ENCODE measurements at regions of chr9 and their contacts with region 1.

Region 1: GRCh38 chr9:112361601-112362000 is 18.3 kb upstream of the HSDL2 start:
- DNase-seq: no peak
- ATAC-seq: no peak
- H3K4me3 Mint-ChIP-seq: no peak overlapping the region
- H3K27ac Mint-ChIP-seq: no peak overlapping the region
- H3K4me1 Mint-ChIP-seq: peaks cover 12% of the 10 kb centered on the region
- H3K27me3 Mint-ChIP-seq: peaks cover 2% of the 10 kb centered on the region
- CTCF ChIP-seq: peak; percentile 89

Region 2: GRCh38 chr9:112074250-112075008 is 287.2 kb before region 1 on chr9:
- CTCF ChIA-PET with region 1: interaction called, 10 read pairs
- POLR2A ChIA-PET with region 1: no interaction called
- intact Hi-C with region 1: no loop called
- DNase-seq: peak; percentile 84
- ATAC-seq: peak; percentile 85
- H3K4me3 Mint-ChIP-seq: peak overlapping the region; percentile 9
- H3K27ac Mint-ChIP-seq: peak overlapping the region; percentile 28
- H3K4me1 Mint-ChIP-seq: peaks cover 28% of the 10 kb centered on the region
- H3K27me3 Mint-ChIP-seq: no peaks in the 10 kb centered on the region
- CTCF ChIP-seq: peak; percentile 91

Region 3: GRCh38 chr9:112097712-112098688 is 263.6 kb before region 1 on chr9:
- CTCF ChIA-PET with region 1: interaction called, 105 read pairs
- POLR2A ChIA-PET with region 1: interaction called, 3 read pairs
- intact Hi-C with region 1: loop called (anchors 2 kb)
- DNase-seq: peak; percentile 74
- ATAC-seq: peak; percentile 90
- H3K4me3 Mint-ChIP-seq: no peak overlapping the region
- H3K27ac Mint-ChIP-seq: no peak overlapping the region
- H3K4me1 Mint-ChIP-seq: peaks cover 31% of the 10 kb centered on the region
- H3K27me3 Mint-ChIP-seq: no peaks in the 10 kb centered on the region
- CTCF ChIP-seq: peak; percentile 85

Region 4: DNA sequence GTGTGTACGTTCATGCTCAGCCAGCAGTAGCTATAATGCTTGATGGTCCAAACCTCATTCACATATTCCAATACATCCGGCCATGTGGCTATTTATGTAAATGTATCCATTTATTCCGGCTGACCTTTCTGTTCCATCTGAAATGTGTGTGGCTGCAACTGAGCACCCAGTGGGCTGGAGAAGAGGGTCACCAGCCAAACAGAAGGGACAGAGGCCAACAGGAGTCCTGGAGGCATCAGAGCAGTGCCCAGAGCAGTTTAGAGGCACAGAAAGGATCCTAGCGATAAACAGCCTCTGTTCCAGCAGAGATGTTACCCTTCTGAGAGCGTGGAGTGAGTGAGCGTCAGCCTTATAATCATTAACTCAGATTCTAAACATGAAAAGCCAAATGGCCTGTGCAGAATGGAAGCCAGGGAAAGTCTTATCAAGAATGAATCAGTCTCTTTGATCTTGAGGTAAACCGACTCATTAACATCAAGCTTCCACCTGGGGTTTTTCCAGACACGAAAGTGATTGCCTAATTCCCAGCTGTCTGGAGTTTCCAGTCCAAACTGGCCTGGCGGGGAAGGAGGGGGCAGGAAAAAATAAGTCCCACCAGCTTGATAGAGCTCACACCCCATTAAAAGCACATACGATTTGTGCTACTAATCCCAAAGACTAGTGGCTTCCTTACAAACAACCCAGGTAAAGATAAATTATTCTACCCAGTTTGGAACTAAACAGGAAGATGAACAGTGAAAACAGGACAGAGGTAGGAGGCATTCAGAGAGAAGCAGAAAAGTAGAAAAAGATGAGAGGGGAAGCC is 242.2 kb before region 1 on chr9:
- CTCF ChIA-PET with region 1: interaction called, 54 read pairs
- POLR2A ChIA-PET with region 1: no interaction called
- intact Hi-C with region 1: no loop called
- DNase-seq: no peak
- ATAC-seq: no peak
- H3K4me3 Mint-ChIP-seq: no peak overlapping the region
- H3K27ac Mint-ChIP-seq: no peak overlapping the region
- H3K4me1 Mint-ChIP-seq: peaks cover 7% of the 10 kb centered on the region
- H3K27me3 Mint-ChIP-seq: no peaks in the 10 kb centered on the region
- CTCF ChIP-seq: no peak

Region 5: DNA sequence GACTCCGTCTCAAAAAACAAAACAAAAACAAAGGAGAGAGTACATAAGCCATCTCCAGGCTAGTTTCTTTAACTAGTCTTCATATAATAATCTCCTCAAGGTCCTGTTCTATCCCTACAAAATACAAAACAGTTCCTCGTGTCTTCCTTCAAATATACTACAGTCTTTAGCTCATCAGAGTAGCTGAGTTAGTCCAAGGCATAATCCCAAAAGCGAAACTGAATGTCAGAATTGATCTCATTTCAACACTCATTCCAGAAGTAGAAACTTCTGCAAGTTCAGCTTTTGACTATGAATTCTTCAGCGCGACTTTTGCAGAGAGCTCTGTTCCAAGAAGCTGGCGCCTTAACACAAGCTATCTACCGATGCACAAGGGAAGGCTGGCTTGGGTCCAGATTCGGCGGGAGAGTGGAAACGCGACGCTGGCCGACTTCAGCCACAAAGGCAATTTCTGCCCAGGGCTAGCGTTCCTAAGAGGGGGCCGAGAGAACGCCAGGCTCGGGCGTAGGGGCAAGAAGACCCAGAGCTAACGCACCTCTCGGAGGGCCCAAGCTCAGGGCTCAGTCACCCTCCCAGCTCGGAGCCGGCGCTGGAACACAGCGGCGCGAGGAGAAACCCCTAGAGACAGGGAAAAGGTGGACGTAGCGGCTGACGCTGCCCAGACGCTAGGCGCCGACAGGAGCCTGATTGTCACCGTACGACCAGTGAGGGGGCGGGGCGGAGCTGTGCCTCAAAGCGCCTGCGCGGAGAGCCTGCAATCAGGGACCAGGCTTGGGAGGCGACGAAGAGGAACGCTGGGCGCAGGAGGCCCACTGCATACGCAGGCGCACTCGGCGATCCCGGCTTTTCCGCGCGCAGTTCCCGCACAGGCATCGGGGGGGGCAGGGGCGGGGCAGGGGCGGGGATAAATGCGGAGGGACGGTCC is 17.8 kb after region 1 on chr9:
- CTCF ChIA-PET with region 1: interaction called, 55 read pairs
- POLR2A ChIA-PET with region 1: interaction called, 6 read pairs
- intact Hi-C with region 1: no loop called
- DNase-seq: peak; percentile 99
- ATAC-seq: peak; percentile 94
- H3K4me3 Mint-ChIP-seq: peak overlapping the region; percentile 87
- H3K27ac Mint-ChIP-seq: peak overlapping the region; percentile 98
- H3K4me1 Mint-ChIP-seq: peaks cover 32% of the 10 kb centered on the region
- H3K27me3 Mint-ChIP-seq: no peaks in the 10 kb centered on the region
- CTCF ChIP-seq: no peak

Region 6: DNA sequence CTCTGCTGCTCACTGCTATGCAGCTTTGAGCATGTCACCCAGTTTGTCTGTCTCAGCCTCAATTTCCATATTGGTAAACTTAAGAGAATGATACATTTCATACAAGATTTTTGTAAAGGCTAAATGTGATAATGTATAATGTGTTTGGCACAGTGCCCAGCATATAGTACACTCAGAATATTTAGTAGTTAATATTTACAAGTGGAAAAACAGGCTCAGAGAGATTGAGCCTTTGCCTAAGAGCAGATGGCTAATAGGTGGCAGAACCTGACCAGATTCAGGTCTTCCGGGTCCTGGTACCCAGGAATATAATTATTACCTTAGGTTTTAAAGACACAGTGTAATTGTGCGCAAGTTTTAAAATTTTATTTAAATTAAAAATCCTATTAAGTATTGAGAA is 78.2 kb after region 1 on chr9:
- CTCF ChIA-PET with region 1: no interaction called
- POLR2A ChIA-PET with region 1: no interaction called
- intact Hi-C with region 1: no loop called
- DNase-seq: no peak
- ATAC-seq: no peak
- H3K4me3 Mint-ChIP-seq: no peak overlapping the region
- H3K27ac Mint-ChIP-seq: no peak overlapping the region
- H3K4me1 Mint-ChIP-seq: no peaks in the 10 kb centered on the region
- H3K27me3 Mint-ChIP-seq: no peaks in the 10 kb centered on the region
- CTCF ChIP-seq: no peak

Measured in activated CD8-positive, alpha-beta T cell treated with anti-CD3 and anti-CD28 coated beads for 36 hours (primary cell).